ENCODE measurements at regions of chr17 and their contacts with region 1.

Region 1: DNA sequence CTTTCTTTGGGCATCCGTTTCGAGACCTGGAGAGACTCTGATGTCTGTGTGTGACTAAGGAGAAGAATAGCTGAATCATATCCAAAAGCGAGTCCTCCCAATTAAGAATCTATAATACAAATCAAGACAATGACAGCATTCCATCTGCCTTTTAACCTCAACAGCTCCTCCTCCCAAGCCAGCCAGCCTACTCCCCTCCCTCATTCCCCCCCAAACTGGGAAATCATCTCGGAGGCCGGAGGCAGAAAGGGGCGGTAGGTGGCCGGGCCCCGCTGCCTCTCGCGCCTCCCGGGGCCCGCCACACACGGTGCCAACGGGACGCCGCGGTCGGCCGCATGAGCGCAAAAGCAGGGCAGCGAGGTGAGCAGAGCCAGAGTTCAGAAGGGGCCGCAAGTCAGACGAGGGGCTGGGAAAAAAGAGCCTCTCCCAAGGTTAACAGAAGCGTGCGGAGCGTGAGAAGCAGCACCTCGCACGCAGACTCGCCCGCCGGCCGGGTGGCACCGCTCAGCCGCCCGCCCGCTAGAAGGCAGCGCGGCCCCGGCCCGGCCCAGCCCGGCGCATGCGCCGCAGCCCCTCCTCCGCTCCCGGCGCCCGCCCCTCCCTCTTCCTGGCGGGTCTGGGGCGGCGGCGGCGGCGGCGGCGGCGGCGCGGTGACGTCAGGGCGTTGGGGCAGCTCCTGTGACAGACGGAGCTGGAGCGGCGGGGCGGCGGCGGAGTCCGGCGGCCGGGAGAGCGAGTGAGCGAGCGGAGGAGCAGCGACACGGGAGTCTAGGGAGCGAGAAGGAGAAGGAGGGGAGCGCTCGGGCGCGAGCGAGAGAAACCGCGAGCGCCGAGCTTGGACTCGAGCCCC is at the start of gene PAFAH1B1:
- DNase-seq: peak; percentile 95
- H3K4me3 ChIP-seq: peak within 1 kb of the TSS; percentile 97
- H3K27ac ChIP-seq: peak within 1 kb of the TSS; percentile 95
- H3K4me1 ChIP-seq: peaks cover 17% of the 10 kb centered on the region
- H3K27me3 ChIP-seq: no peaks in the 10 kb centered on the region
- CTCF ChIP-seq: 0 out of 2 replicates have a peak, but pooled peaks have one; percentile 14
- total RNA-seq, gene PAFAH1B1: 210 and 212 TPM in 2 replicates

Region 2: GRCh38 chr17:2511462-2512369 is 81.5 kb before region 1 on chr17 and contains the start of gene METTL16:
- CTCF ChIA-PET with region 1: no interaction called
- POLR2A ChIA-PET with region 1: interaction called, 3 read pairs
- intact Hi-C with region 1: loop called (anchors 10 kb)
- DNase-seq: peak; percentile 100
- H3K4me3 ChIP-seq: peak within 1 kb of the TSS; percentile 64
- H3K27ac ChIP-seq: peak within 1 kb of the TSS; percentile 91
- H3K4me1 ChIP-seq: peaks cover 6% of the 10 kb centered on the region
- H3K27me3 ChIP-seq: no peaks in the 10 kb centered on the region
- CTCF ChIP-seq: no peak
- total RNA-seq, gene METTL16: 50.8 and 51.3 TPM in 2 replicates

Measured in A673 (cell line).